Testis (tissue), 5 donors: ENCODE measurements at regions of chr4 and their contacts with region 1.

Region 1: GRCh38 chr4:99405433-99406115 is 29.6 kb downstream of the ADH7 start:
- DNase-seq: peak; percentile 82
- H3K4me3 ChIP-seq: no peak overlapping the region
- H3K27ac ChIP-seq: peak overlapping the region in 1 of 2 donors; percentile 73
- H3K4me1 ChIP-seq: peaks cover 14% of the 10 kb centered on the region
- H3K27me3 ChIP-seq: no peaks in the 10 kb centered on the region
- CTCF ChIP-seq: peak; percentile 86 to 98 (median 97)
- POLR2A ChIP-seq: no peak

Region 2: DNA sequence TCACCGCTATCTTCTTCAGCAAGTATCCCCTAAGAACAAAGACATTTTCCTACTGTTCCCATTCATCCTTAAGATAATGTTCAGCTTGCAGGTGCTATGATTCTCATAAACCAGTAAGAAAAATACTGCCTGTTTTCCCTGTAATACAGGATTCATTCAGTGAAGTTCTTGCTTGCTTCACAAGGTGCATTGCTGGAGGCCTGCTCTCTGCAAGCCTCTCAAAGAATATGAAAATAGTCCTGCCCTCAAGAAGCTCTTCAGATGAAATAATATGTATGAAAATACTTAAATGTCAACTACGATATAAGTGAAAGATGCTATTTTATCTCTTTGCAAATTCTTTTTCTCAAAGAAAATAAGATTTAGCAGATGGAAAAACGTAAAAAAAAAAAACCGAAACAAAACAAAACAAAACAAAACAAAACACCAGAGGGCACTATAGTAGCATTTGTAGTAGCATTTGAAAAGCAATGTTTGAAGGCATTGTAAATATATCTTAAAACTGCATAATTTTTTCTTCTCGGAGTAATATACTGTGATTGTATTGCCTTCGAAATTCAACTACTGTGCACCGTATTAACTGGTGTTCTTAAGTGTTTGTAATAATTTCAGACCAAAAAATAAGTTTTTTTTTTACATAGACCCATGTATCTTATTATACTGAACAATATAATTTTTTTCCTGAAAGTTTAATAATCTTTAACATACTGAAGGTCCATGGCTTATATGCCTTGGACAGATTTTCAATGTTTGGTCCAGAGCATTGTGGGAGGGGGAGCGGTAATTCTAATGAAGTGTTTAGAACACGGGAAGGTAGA is 287.5 kb before region 1 on chr4:
- intact Hi-C with region 1: loop called (anchors 5 kb)
- DNase-seq: no peak
- H3K4me3 ChIP-seq: no peak overlapping the region
- H3K27ac ChIP-seq: no peak overlapping the region
- H3K4me1 ChIP-seq: no peaks in the 10 kb centered on the region
- H3K27me3 ChIP-seq: no peaks in the 10 kb centered on the region
- CTCF ChIP-seq: peak in 1 of 3 experiments; percentile 23
- POLR2A ChIP-seq: no peak

Region 3: GRCh38 chr4:99205153-99205979 is 200.2 kb before region 1 on chr4:
- intact Hi-C with region 1: loop called (anchors 10 kb)
- DNase-seq: peak; percentile 28
- H3K4me3 ChIP-seq: no peak overlapping the region
- H3K27ac ChIP-seq: no peak overlapping the region
- H3K4me1 ChIP-seq: peaks cover 5% of the 10 kb centered on the region
- H3K27me3 ChIP-seq: no peaks in the 10 kb centered on the region
- CTCF ChIP-seq: no peak
- POLR2A ChIP-seq: no peak

Region 4: GRCh38 chr4:100008048-100008447 is 602.5 kb after region 1 on chr4:
- intact Hi-C with region 1: no loop called
- DNase-seq: no peak
- H3K4me3 ChIP-seq: no peak overlapping the region
- H3K27ac ChIP-seq: no peak overlapping the region
- H3K4me1 ChIP-seq: no peaks in the 10 kb centered on the region
- H3K27me3 ChIP-seq: no peaks in the 10 kb centered on the region
- CTCF ChIP-seq: no peak
- POLR2A ChIP-seq: no peak